GM13977 (cell line): ENCODE measurements at regions of chr9 and their contacts with region 1.

Region 1: GRCh38 chr9:126558051-126558665 is 55.6 kb upstream of the LMX1B start:
- DNase-seq: peak; percentile 86
- CTCF ChIP-seq: peak; percentile 99

Region 2: DNA sequence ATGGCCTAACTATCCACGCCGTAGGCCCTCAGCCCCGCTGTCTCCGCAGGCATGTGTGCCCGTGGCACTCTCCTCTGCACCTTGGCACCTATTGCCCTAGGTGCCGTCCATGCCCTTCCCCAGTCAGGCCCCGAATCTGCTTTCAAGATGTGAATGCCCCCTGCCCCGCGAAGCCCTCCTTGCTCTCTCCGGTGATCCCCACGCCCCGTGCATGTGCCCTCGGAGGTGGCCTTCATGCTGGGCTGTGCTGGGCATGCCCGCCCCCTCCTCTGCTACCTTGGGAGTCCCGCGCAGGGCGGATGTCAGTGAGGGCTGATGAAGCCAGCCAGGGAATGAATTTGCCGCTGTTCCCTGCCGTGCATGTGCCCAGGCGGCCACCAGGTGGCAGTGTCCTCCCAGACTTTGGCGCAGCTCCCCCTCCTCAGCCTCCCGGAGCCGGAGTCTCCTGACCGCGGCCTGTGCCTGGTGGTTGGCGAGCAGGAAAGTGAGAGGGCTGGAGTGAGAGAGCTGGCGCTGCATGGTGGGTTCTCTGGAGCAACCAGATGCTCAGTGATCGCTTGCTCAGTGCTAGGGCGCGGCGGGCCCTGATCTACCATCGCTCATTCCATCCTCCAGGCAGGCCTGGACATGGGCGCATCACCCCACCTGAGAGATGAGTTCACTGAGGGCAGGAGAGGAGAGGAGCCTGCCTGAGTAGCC is 57.3 kb before region 1 on chr9:
- in situ Hi-C with region 1: loop called (anchors 10 kb)
- DNase-seq: peak; percentile 88
- CTCF ChIP-seq: peak; percentile 98